ENCODE measurements at regions of chr4 and their contacts with region 1.

Region 1: DNA sequence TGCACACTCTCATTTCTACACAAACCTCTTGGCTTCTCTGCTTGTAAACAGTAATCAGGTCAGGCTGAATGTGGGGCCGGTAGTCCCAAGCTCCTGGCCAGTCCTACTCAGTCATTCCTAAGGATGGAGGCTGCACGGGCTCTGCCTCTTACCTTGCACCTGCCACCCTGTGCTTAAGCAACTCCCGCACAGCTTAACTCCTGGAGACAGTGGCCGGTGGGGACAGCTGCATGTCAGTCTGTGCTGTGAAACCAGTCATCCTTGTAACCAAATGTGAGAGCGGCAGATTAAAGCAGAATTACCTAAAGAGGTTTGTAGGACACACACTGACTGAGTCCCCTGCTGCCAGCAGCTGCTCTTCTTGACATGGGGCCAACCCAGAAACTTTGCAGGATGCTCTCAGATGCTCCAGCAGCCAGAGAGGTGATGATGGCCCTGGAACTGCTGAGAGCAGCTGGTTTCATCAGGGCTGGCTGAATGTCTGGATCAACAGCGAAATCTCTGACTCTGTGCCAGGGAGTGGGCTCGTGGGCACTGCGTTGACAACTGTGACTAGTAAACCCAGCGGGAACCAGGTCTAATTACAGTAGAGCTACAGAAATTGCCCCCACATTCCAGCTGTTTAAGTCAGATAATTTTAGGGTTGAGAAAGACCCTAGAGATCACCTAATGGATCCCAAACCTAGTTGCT is 123.7 kb downstream of the ANAPC4 start:
- DNase-seq: no peak
- H3K4me3 ChIP-seq: no peak overlapping the region
- CTCF ChIP-seq: no peak
- POLR2A ChIP-seq: no peak

Region 2: GRCh38 chr4:24121395-24122175 is 1379.2 kb before region 1 on chr4:
- intact Hi-C with region 1: loop called (anchors 5 kb)
- DNase-seq: no peak
- H3K4me3 ChIP-seq: no peak overlapping the region
- CTCF ChIP-seq: no peak
- POLR2A ChIP-seq: no peak

Region 3: DNA sequence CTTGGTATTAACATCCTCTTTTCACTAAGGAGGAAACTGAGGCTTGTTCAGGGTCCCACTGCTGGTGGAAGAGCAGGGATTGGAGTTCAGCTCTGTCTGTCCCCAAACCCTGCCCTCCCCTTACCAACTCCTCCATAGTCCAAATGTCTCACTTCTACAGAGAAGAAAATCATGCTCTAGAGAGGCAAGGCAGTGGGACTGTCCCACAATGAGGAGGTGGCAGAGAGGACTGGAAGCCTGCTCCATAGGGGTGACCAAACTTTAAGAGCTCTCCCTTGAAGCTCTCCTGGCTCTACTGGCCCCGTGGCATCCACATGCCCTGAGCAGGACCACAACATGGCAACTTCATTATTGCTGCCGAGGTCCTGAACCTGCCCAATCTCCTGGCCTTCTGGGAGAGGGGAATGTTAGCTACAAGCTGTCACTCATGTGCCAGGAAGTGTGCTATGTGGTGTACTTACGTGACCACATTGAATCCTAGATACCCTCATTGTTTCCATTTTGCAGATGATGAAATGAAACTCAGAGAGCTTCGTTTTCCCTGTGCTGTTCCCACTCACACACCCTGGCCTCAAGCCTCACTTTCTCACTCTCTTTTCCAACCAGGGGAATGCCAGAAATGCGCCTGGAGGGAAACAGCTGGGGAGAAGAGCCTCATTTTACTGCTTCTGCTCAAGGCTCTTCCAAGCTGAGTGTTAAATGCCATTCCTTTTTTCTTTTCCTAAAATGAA is 52.2 kb before region 1 on chr4:
- intact Hi-C with region 1: no loop called
- DNase-seq: no peak
- H3K4me3 ChIP-seq: no peak overlapping the region
- CTCF ChIP-seq: no peak
- POLR2A ChIP-seq: no peak

Region 4: GRCh38 chr4:25512505-25512904 is 11.7 kb after region 1 on chr4:
- intact Hi-C with region 1: no loop called
- DNase-seq: no peak
- H3K4me3 ChIP-seq: no peak overlapping the region
- CTCF ChIP-seq: no peak
- POLR2A ChIP-seq: no peak

Region 5: GRCh38 chr4:25861951-25862410 is 361.2 kb after region 1 on chr4:
- intact Hi-C with region 1: no loop called
- DNase-seq: no peak
- H3K4me3 ChIP-seq: peak overlapping the region; percentile 53
- CTCF ChIP-seq: no peak
- POLR2A ChIP-seq: no peak